ENCODE measurements at regions of chr17 and their contacts with region 1.

Region 1: GRCh38 chr17:64240741-64241347 is 22.2 kb downstream of the TEX2 start:
- DNase-seq: peak; percentile 54 to 81 (median 64)
- ATAC-seq: peak; percentile 57 to 88 (median 78)
- H3K4me3 ChIP-seq: peak overlapping the region in 1 of 12 donors; percentile 8
- H3K27ac ChIP-seq: peak overlapping the region in 11 of 12 donors; percentile 11 to 78 (median 57)
- H3K4me1 ChIP-seq: peaks cover 2 to 55% (median 24%) of the 10 kb centered on the region in 12 donors
- H3K27me3 ChIP-seq: no peaks in the 10 kb centered on the region
- CTCF ChIP-seq: no peak
- POLR2A ChIP-seq: no peak

Region 2: GRCh38 chr17:64190488-64190887 is 50.4 kb before region 1 on chr17:
- intact Hi-C with region 1: loop called in 1 of 10 experiments (anchors 1 kb)
- DNase-seq: peak in 3 of 5 donors; percentile 36 to 54 (median 47)
- ATAC-seq: peak; percentile 42 to 87 (median 69)
- H3K4me3 ChIP-seq: no peak overlapping the region
- H3K27ac ChIP-seq: peak overlapping the region in 3 of 12 donors; percentile 1 to 43 (median 13)
- H3K4me1 ChIP-seq: peaks cover 0 to 40% (median 17%) of the 10 kb centered on the region in 12 donors
- H3K27me3 ChIP-seq: no peaks in the 10 kb centered on the region
- CTCF ChIP-seq: no peak
- POLR2A ChIP-seq: no peak

Region 3: GRCh38 chr17:64262417-64263260 is 21.8 kb after region 1 on chr17 and contains the start of gene TEX2:
- intact Hi-C with region 1: loop called in 1 of 10 experiments (anchors 2 kb)
- DNase-seq: peak; percentile 56 to 81 (median 67)
- ATAC-seq: peak; percentile 30 to 70 (median 64)
- H3K4me3 ChIP-seq: peak within 1 kb of the TSS; percentile 86 to 100 (median 96)
- H3K27ac ChIP-seq: peak within 1 kb of the TSS; percentile 62 to 97 (median 93)
- H3K4me1 ChIP-seq: peaks cover 4 to 50% (median 33%) of the 10 kb centered on the region in 12 donors
- H3K27me3 ChIP-seq: no peaks in the 10 kb centered on the region
- CTCF ChIP-seq: no peak
- POLR2A ChIP-seq: peak; percentile 21 to 65
- total RNA-seq, gene TEX2: 42.2 to 55.8 (median 51.1) TPM

Measured in heart left ventricle (tissue), 16 donors.